Mammary epithelial cell (primary cell): ENCODE measurements at regions of chr13 and their contacts with region 1.

Region 1: DNA sequence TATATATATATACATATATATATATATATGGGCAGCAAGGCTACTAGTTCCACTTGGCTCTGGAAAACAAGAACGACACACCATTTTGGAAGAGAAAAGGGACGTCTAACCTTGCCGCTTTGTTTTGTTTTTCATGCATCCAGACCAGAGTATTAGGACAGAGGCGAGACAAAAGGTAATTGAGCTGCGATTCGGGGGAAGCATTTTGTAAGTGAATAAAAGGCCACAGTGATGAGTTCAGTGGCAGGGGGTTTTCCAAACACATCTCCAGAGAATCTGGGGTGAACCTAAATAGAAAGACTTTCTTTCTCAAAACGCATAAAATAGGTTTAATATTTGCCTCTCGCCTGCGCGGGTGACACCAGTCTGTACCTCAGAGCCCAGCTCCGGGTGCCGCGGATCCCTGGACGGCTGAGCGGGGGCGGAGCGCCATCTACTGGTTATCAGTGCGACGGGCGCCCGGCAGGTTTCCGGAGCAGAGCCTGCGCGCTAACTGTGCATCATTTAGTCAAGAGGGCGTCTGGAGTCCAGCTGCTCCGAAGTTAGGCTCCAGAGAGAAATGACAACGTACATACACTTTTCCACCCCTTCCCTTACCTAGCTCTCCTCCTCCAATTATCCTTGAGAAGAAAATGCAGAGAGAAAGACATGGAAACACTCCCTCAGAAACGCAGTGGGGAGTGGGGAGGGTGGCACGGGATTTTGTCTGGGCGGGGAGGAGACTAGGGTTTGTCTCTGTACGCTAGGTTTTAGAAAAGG is 262.3 kb downstream of the TBC1D4 start:
- DNase-seq: peak; percentile 59
- H3K4me3 ChIP-seq: peak overlapping the region; percentile 26 to 41 (median 30)
- H3K27ac ChIP-seq: no peak overlapping the region
- H3K4me1 ChIP-seq: peaks cover 14% of the 10 kb centered on the region
- H3K27me3 ChIP-seq: no peaks in the 10 kb centered on the region
- CTCF ChIP-seq: peak; percentile 89 to 96

Region 2: DNA sequence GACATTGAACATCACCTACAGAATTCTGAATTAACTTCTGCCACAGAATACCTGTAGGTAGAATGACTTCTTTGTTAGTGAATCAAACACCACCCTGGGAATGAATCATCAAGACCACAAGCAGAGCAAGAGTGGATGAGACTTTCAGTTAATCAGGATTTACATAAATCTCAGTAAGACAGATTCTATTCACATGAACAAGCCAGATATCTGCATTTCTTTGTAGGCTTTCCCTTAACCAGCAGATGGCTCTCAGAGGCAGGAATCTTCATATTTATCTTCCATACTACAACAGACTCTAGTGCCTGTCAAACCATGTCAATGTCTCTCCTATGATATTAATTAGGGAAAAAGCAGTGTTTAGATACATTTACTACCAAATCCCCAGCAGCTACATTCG is 1497.5 kb before region 1 on chr13:
- CTCF ChIA-PET with region 1: no interaction called
- dilution Hi-C with region 1: no loop called
- in situ Hi-C with region 1: no loop called
- intact Hi-C with region 1: loop called (anchors 10 kb)
- DNase-seq: peak; percentile 94
- H3K4me3 ChIP-seq: no peak overlapping the region
- H3K27ac ChIP-seq: peak overlapping the region; percentile 80
- H3K4me1 ChIP-seq: peaks cover 33% of the 10 kb centered on the region
- H3K27me3 ChIP-seq: no peaks in the 10 kb centered on the region
- CTCF ChIP-seq: peak; percentile 43 to 56

Region 3: DNA sequence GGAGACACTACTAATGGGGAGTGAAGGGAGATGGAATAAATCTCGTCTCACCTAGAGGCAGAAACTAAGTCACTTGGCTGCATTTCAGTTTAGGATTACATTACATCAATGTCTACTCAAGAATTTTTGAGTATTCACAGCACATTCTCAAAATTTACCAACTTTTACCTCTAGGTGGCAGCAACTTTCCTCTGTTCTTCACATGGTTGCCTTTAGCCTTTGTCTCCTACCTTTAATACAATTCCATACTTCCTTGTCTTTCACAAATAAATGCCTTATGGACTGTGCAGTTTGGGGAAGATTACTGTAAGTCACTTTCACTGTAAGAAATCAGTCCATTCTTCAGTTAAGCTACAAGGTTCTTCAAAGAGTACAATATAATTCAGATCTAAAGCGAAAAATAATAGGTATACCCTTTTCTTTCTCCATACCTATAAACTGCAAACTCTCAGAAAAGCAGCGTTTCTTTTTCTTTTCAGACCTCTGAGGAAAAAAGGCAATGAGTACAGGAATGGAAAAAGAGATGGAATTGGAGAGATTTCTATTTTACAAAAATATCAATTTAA is 1464.8 kb before region 1 on chr13:
- CTCF ChIA-PET with region 1: no interaction called
- dilution Hi-C with region 1: no loop called
- in situ Hi-C with region 1: no loop called
- intact Hi-C with region 1: loop called (anchors 1 kb)
- DNase-seq: peak; percentile 50
- H3K4me3 ChIP-seq: no peak overlapping the region
- H3K27ac ChIP-seq: no peak overlapping the region
- H3K4me1 ChIP-seq: no peaks in the 10 kb centered on the region
- H3K27me3 ChIP-seq: no peaks in the 10 kb centered on the region
- CTCF ChIP-seq: peak; percentile 57 to 72

Region 4: DNA sequence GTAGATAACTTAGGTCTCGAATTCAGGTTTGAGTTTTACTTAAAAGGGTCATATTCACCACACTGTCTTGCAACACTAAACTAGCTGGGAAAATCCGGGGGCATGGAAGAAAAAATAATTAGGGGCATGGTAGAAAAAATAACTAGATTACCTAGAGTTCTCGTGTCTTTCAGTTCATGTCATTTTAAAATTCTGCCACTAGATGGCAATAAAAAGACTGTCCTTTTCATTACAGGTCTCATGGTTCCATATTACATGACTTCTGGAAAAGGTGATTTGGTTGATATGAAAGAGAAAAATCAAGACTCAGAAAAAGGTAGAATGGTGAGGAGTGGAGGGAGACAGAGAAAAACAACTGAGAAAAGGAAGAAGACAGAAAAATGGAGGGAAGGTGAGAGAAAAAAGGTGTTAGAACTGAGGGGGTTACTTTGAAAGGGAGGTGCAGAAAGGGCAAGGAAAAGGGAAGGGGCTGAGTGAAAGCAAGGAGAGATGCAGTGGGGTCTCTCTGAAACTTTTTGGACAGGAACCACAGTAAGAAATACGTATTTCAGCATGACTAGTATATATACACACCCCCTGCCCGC is 1384.4 kb before region 1 on chr13:
- CTCF ChIA-PET with region 1: no interaction called
- dilution Hi-C with region 1: no loop called
- in situ Hi-C with region 1: no loop called
- intact Hi-C with region 1: loop called (anchors 5 kb)
- DNase-seq: peak; percentile 36
- H3K4me3 ChIP-seq: no peak overlapping the region
- H3K27ac ChIP-seq: no peak overlapping the region
- H3K4me1 ChIP-seq: no peaks in the 10 kb centered on the region
- H3K27me3 ChIP-seq: no peaks in the 10 kb centered on the region
- CTCF ChIP-seq: peak; percentile 54 to 61

Region 5: GRCh38 chr13:74575729-74576125 is 643.9 kb before region 1 on chr13:
- CTCF ChIA-PET with region 1: no interaction called
- dilution Hi-C with region 1: no loop called
- in situ Hi-C with region 1: no loop called
- intact Hi-C with region 1: loop called (anchors 10 kb)
- DNase-seq: peak; percentile 5
- H3K4me3 ChIP-seq: peak overlapping the region; percentile 26 to 36 (median 27)
- H3K27ac ChIP-seq: no peak overlapping the region
- H3K4me1 ChIP-seq: no peaks in the 10 kb centered on the region
- H3K27me3 ChIP-seq: peaks cover 6% of the 10 kb centered on the region
- CTCF ChIP-seq: no peak

Region 6: GRCh38 chr13:74683411-74683810 is 536.2 kb before region 1 on chr13:
- CTCF ChIA-PET with region 1: no interaction called
- dilution Hi-C with region 1: no loop called
- in situ Hi-C with region 1: no loop called
- intact Hi-C with region 1: loop called (anchors 1 kb)
- DNase-seq: peak; percentile 23
- H3K4me3 ChIP-seq: no peak overlapping the region
- H3K27ac ChIP-seq: no peak overlapping the region
- H3K4me1 ChIP-seq: no peaks in the 10 kb centered on the region
- H3K27me3 ChIP-seq: no peaks in the 10 kb centered on the region
- CTCF ChIP-seq: peak; percentile 30 to 53

Region 7: DNA sequence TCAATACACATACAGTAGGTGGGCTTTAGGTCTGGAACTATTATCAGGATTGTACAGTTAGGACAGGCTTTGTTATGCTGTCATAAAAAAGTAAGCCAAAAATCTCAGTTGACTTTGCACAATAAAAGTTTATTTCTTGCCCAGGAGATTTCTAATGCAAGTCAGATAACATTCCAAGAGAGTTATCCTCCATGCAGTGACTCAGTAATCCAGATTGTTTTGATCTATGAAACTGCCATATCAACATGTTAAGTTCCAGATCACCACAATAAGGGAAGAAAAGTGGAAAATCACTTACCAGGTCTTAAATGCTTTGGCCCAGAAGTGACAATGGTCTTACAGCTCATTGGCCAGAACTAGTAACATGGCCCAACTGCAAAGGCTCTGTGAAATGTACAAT is 449.3 kb before region 1 on chr13:
- CTCF ChIA-PET with region 1: no interaction called
- dilution Hi-C with region 1: no loop called
- in situ Hi-C with region 1: no loop called
- intact Hi-C with region 1: loop called (anchors 2 kb)
- DNase-seq: peak; percentile 81
- H3K4me3 ChIP-seq: no peak overlapping the region
- H3K27ac ChIP-seq: peak overlapping the region; percentile 58
- H3K4me1 ChIP-seq: peaks cover 20% of the 10 kb centered on the region
- H3K27me3 ChIP-seq: no peaks in the 10 kb centered on the region
- CTCF ChIP-seq: no peak